Activated B cell treated with CpG ODN at 0.5 μM for 24 hours (primary cell): ENCODE measurements at regions of chr6 and their contacts with region 1.

Region 1: DNA sequence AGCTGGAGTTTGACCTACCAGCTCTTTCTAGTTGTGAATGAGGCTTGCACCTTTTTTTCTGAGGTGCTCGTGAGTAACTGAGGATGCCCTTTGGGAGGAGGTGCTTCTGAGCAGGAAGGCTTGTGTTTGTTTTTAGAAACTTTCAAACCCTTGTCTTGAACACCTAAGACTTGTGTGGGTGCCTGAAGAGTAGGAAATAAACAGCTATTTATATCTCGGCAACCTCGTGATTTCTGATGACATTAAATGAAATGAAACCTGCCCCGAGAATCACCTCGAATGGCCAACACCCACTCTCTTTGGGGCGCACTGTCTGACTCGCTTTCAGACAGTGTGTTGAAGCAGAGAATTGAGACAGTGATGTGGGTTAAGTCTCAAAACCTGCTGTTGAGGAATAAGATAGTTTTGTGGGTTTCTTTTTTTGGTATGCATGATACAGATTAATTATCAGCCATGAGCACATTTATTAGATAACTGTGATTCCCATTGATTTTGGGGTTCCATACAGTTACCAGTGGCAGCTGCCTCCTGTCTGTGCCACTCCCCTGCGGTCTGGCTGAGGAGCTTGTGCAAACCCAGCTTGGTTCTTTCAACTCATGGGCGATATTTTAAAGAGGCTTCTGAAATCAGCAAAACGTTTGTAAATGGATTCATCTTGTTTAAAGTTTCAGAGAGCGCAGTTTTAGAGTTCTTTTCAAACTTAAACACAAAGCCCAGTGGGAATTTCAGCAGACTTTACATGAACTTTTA is 8.4 kb downstream of the IRF4 start:
- DNase-seq: no peak
- ATAC-seq: peak; percentile 51
- H3K4me3 Mint-ChIP-seq: peak overlapping the region; percentile 29
- H3K27ac Mint-ChIP-seq: peak overlapping the region; percentile 69
- H3K4me1 Mint-ChIP-seq: peaks cover 93% of the 10 kb centered on the region
- H3K27me3 Mint-ChIP-seq: no peaks in the 10 kb centered on the region
- CTCF ChIP-seq: no peak

Region 2: GRCh38 chr6:217048-217659 is 182.8 kb before region 1 on chr6:
- CTCF ChIA-PET with region 1: interaction called, 4 read pairs
- POLR2A ChIA-PET with region 1: interaction called, 137 read pairs
- intact Hi-C with region 1: no loop called
- DNase-seq: no peak
- ATAC-seq: no peak
- H3K4me3 Mint-ChIP-seq: peak overlapping the region; percentile 61
- H3K27ac Mint-ChIP-seq: peak overlapping the region; percentile 90
- H3K4me1 Mint-ChIP-seq: peaks cover 81% of the 10 kb centered on the region
- H3K27me3 Mint-ChIP-seq: no peaks in the 10 kb centered on the region
- CTCF ChIP-seq: no peak

Region 3: GRCh38 chr6:422433-423054 is 22.6 kb after region 1 on chr6:
- CTCF ChIA-PET with region 1: no interaction called
- POLR2A ChIA-PET with region 1: interaction called, 10 read pairs
- intact Hi-C with region 1: no loop called
- DNase-seq: no peak
- ATAC-seq: peak; percentile 96
- H3K4me3 Mint-ChIP-seq: peak overlapping the region; percentile 7
- H3K27ac Mint-ChIP-seq: peak overlapping the region; percentile 75
- H3K4me1 Mint-ChIP-seq: peaks cover 15% of the 10 kb centered on the region
- H3K27me3 Mint-ChIP-seq: no peaks in the 10 kb centered on the region
- CTCF ChIP-seq: no peak

Region 4: GRCh38 chr6:447381-448165 is 47.6 kb after region 1 on chr6:
- CTCF ChIA-PET with region 1: no interaction called
- POLR2A ChIA-PET with region 1: no interaction called
- intact Hi-C with region 1: no loop called
- DNase-seq: no peak
- ATAC-seq: no peak
- H3K4me3 Mint-ChIP-seq: no peak overlapping the region
- H3K27ac Mint-ChIP-seq: no peak overlapping the region
- H3K4me1 Mint-ChIP-seq: peaks cover 14% of the 10 kb centered on the region
- H3K27me3 Mint-ChIP-seq: no peaks in the 10 kb centered on the region
- CTCF ChIP-seq: no peak

Region 5: DNA sequence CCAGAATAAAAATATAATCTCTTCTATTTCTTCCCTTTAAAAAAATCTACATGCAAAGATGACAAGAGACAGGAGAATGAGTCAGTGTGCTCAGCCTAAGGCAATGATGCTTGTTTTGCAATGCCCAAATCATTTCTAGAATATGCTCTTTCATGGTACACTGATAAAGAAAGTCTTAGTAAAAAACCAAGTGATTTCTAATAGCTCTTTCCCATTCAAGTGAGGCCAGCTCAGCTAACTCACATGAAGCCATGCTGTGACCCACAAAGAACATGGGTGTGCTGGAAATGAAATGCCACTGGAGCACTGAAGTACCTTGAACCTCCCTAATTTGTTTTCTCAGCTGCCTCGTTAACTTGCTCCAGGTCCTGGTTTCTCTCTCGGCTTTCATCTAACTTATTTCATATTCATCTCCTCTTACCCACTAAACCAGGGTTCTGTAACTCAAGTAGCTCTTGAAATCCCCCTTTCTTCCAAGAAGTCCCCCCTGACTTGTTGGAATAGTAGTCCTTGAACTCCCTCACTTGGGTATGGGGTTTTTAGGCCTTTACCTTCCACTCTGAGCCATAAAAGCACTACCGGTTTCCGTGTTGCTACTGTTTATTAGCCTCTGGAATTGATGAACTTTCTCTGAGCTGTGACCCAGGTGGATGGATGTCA is 84.3 kb after region 1 on chr6:
- CTCF ChIA-PET with region 1: interaction called, 5 read pairs
- POLR2A ChIA-PET with region 1: interaction called, 39 read pairs
- intact Hi-C with region 1: no loop called
- DNase-seq: no peak
- ATAC-seq: peak; percentile 7
- H3K4me3 Mint-ChIP-seq: no peak overlapping the region
- H3K27ac Mint-ChIP-seq: peak overlapping the region; percentile 72
- H3K4me1 Mint-ChIP-seq: peaks cover 51% of the 10 kb centered on the region
- H3K27me3 Mint-ChIP-seq: no peaks in the 10 kb centered on the region
- CTCF ChIP-seq: no peak

Region 6: GRCh38 chr6:650098-650497 is 250.1 kb after region 1 on chr6:
- CTCF ChIA-PET with region 1: no interaction called
- POLR2A ChIA-PET with region 1: no interaction called
- intact Hi-C with region 1: no loop called
- DNase-seq: no peak
- ATAC-seq: no peak
- H3K4me3 Mint-ChIP-seq: no peak overlapping the region
- H3K27ac Mint-ChIP-seq: no peak overlapping the region
- H3K4me1 Mint-ChIP-seq: peaks cover 7% of the 10 kb centered on the region
- H3K27me3 Mint-ChIP-seq: no peaks in the 10 kb centered on the region
- CTCF ChIP-seq: no peak